Panc1 (cell line): ENCODE measurements at regions of chr10 and their contacts with region 1.

Region 1: GRCh38 chr10:106761906-106762305 is 402.6 kb downstream of the SORCS1 start:
- DNase-seq: no peak
- ATAC-seq: no peak
- H3K4me3 ChIP-seq: no peak overlapping the region
- H3K27ac ChIP-seq: no peak overlapping the region
- H3K4me1 ChIP-seq: no peaks in the 10 kb centered on the region
- H3K27me3 ChIP-seq: no peaks in the 10 kb centered on the region
- CTCF ChIP-seq: no peak

Region 2: GRCh38 chr10:106751091-106751490 is 10.8 kb before region 1 on chr10:
- CTCF ChIA-PET with region 1: interaction called, 10 read pairs
- POLR2A ChIA-PET with region 1: no interaction called
- in situ Hi-C with region 1: no loop called
- intact Hi-C with region 1: no loop called
- DNase-seq: no peak
- ATAC-seq: no peak
- H3K4me3 ChIP-seq: no peak overlapping the region
- H3K27ac ChIP-seq: no peak overlapping the region
- H3K4me1 ChIP-seq: no peaks in the 10 kb centered on the region
- H3K27me3 ChIP-seq: no peaks in the 10 kb centered on the region
- CTCF ChIP-seq: no peak

Region 3: GRCh38 chr10:107103174-107104025 is 341.5 kb after region 1 on chr10:
- CTCF ChIA-PET with region 1: no interaction called
- POLR2A ChIA-PET with region 1: no interaction called
- in situ Hi-C with region 1: no loop called
- intact Hi-C with region 1: no loop called
- DNase-seq: no peak
- ATAC-seq: no peak
- H3K4me3 ChIP-seq: no peak overlapping the region
- H3K27ac ChIP-seq: no peak overlapping the region
- H3K4me1 ChIP-seq: no peaks in the 10 kb centered on the region
- H3K27me3 ChIP-seq: no peaks in the 10 kb centered on the region
- CTCF ChIP-seq: no peak